Activated T-helper 2 cell treated with anti-CD3 and anti-CD28 coated beads, Interferon-gamma antibody, Interleukin-2, Interleukin-4, amounts not matched to agents 10 μg/mL and 5 μg/mL and 100 μg/mL, durations not matched to agents 14 hours and 24 hours and 36 hours (primary cell): ENCODE measurements at regions of chr5 and their contacts with region 1.

Region 1: DNA sequence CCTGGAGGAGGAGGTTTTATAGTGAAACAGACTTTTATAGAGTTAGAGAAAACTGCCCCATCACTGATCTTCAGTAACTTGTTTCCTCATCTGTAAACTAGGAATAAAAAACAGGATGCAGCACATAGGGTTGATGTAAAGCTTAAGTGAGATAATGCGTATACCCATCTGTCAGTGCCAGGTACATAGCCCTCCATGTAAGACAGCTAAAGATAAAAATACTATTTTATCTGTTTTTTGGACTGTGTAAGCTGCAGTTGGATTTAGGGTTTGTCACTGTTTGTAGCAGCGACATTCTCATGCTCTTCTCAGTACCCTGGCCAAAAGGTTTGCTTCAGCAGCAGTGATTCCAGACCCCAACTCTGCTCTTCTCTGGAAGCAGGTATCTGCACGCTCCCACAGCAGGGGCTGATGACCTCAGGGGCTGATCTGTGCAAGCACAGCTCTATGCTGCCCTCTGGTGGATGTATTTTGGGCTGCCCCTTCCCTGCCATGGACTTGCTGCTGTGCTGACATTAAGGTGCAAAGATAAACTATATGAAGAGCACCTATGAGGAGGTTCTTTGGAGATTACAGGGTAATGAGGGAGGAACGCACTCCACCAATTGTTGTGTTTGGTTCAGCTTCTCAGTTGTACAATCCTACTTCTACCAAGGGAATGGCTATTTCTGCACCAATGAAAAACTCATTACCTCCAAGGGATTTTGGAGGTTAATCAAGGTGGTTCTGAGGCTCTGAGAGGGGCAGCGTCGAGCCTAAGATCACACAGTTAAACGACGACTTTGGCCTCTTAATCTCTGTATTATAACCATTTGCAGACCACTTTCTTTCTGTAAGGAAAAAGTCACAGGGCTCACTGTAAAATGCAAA is 13.1 kb downstream of the HMHB1 start:
- DNase-seq: peak; percentile 71
- H3K4me3 Mint-ChIP-seq: no peak overlapping the region
- H3K27ac Mint-ChIP-seq: no peak overlapping the region
- H3K4me1 Mint-ChIP-seq: peaks cover 11% of the 10 kb centered on the region
- H3K27me3 Mint-ChIP-seq: no peaks in the 10 kb centered on the region

Region 2: GRCh38 chr5:142922223-142922952 is 902.7 kb before region 1 on chr5:
- intact Hi-C with region 1: loop called (anchors 10 kb)
- DNase-seq: no peak
- H3K4me3 Mint-ChIP-seq: no peak overlapping the region
- H3K27ac Mint-ChIP-seq: no peak overlapping the region
- H3K4me1 Mint-ChIP-seq: peaks cover 33% of the 10 kb centered on the region
- H3K27me3 Mint-ChIP-seq: no peaks in the 10 kb centered on the region

Region 3: GRCh38 chr5:143101121-143101520 is 724.0 kb before region 1 on chr5:
- intact Hi-C with region 1: loop called (anchors 1 kb)
- DNase-seq: no peak
- H3K4me3 Mint-ChIP-seq: peak overlapping the region; percentile 52
- H3K27ac Mint-ChIP-seq: peak overlapping the region; percentile 95
- H3K4me1 Mint-ChIP-seq: peaks cover 48% of the 10 kb centered on the region
- H3K27me3 Mint-ChIP-seq: no peaks in the 10 kb centered on the region

Region 4: DNA sequence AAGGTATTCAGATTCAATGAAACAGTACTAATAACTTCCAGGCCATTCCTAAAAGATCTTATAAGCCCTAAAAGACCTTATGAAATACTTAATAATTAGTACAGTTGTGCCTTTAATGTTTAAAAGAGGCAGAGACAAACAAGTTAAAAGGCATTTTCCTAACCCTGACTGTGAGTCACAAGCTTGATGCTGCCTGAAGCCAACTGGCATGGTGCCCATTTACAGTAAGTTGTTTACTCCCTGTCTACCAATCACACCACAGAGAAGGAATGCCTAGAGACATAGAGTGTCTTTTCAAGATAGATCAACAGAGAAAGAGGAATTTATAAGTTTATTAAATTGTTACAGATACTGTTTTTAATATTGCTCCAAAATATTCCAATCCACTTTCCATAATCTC is 469.4 kb before region 1 on chr5:
- intact Hi-C with region 1: loop called (anchors 2 kb)
- DNase-seq: no peak
- H3K4me3 Mint-ChIP-seq: no peak overlapping the region
- H3K27ac Mint-ChIP-seq: no peak overlapping the region
- H3K4me1 Mint-ChIP-seq: peaks cover 55% of the 10 kb centered on the region
- H3K27me3 Mint-ChIP-seq: no peaks in the 10 kb centered on the region

Region 5: DNA sequence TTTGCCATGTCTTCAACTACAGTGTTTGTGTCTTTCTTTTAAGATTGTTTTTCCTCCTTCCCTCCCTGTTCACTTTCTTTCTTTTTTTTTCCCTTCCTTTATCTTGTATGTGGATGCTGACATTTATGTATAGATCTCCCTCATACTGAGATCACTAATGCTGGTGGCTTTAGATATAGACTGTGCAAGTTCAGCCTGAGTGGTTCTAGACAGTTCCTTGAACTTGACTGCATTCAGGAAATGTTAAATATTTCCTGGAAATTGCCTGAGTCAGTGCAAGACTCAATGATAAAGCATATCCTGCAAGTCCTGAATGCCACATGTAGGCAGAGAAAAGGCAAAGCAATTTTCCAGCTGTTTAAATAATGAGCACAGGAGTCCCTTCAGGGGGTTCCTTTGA is 239.1 kb before region 1 on chr5:
- intact Hi-C with region 1: loop called (anchors 5 kb)
- DNase-seq: no peak
- H3K4me3 Mint-ChIP-seq: peak overlapping the region; percentile 6
- H3K27ac Mint-ChIP-seq: peak overlapping the region; percentile 71
- H3K4me1 Mint-ChIP-seq: peaks cover 61% of the 10 kb centered on the region
- H3K27me3 Mint-ChIP-seq: no peaks in the 10 kb centered on the region

Region 6: DNA sequence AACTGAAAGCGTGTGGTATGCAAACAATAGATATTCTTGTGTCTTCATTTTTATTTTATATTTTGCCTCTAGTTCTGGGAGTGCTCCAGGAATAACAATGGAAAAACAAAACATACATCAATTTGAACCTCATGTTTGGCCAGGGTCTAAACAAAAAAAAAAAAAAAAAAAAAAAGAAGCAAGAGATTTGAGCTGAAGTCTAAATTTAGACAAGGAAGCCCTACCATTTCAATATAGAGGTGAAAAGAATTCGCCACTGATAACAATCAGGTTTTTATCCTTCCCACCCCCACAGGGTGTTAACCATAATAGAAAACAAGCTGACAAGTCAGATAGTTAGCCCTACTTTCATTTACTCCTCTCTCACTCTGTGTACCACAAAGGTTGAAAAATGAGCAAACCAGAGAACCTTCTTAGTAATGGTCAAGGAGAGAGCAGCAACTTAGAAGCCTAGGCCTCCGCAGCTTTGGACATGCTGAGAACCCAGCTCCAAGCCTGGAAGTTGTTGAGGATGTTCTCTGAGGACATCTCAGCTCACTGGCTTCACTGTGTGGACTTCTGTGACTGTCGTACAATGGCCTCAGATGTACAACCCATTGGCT is 131.3 kb before region 1 on chr5:
- intact Hi-C with region 1: loop called (anchors 2 kb)
- DNase-seq: peak; percentile 11
- H3K4me3 Mint-ChIP-seq: no peak overlapping the region
- H3K27ac Mint-ChIP-seq: peak overlapping the region; percentile 68
- H3K4me1 Mint-ChIP-seq: peaks cover 57% of the 10 kb centered on the region
- H3K27me3 Mint-ChIP-seq: no peaks in the 10 kb centered on the region